ENCODE measurements at regions of chr11 and their contacts with region 1.

Region 1: GRCh38 chr11:21066030-21066429 is 396.6 kb downstream of the NELL1 start:
- DNase-seq: no peak
- H3K4me3 ChIP-seq: peak overlapping the region; percentile 20; the same call in 1 of the 2 replicates
- H3K27ac ChIP-seq: no peak overlapping the region
- H3K4me1 ChIP-seq: no peaks in the 10 kb centered on the region
- H3K27me3 ChIP-seq: no peaks in the 10 kb centered on the region
- CTCF ChIP-seq: no peak

Region 2: GRCh38 chr11:19553683-19554333 is 1512.2 kb before region 1 on chr11:
- CTCF ChIA-PET with region 1: no interaction called
- POLR2A ChIA-PET with region 1: no interaction called
- intact Hi-C with region 1: no loop called
- DNase-seq: peak; percentile 68 to 81
- H3K4me3 ChIP-seq: no peak overlapping the region
- H3K27ac ChIP-seq: no peak overlapping the region
- H3K4me1 ChIP-seq: no peaks in the 10 kb centered on the region
- H3K27me3 ChIP-seq: no peaks in the 10 kb centered on the region
- CTCF ChIP-seq: peak; percentile 99

Region 3: DNA sequence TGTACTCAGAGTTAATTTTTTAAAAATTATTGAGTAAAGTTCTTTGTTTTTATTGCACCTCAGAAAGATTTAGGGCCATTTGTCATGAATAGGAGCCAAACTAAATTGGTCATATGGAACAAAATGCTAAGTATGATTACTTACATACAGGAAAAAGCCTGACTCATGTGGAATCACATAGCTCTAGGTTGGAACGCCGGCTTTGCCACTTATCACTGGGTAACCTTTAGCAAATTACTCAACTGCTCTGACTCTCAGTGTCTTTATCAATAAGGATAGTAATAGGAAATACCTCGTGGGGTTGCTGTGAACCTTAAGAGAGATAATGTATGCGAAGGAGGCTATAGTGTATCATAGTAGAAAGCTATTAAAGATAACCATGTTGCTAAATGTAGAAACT is 241.8 kb after region 1 on chr11:
- CTCF ChIA-PET with region 1: no interaction called
- POLR2A ChIA-PET with region 1: interaction called, 13 read pairs
- intact Hi-C with region 1: no loop called
- DNase-seq: no peak
- H3K4me3 ChIP-seq: no peak overlapping the region
- H3K27ac ChIP-seq: no peak overlapping the region
- H3K4me1 ChIP-seq: no peaks in the 10 kb centered on the region
- H3K27me3 ChIP-seq: no peaks in the 10 kb centered on the region
- CTCF ChIP-seq: no peak